ENCODE measurements at regions of chr22 and their contacts with region 1.

Region 1: GRCh38 chr22:31630331-31631329 is 31.4 kb downstream of the PISD start:
- DNase-seq: peak; percentile 83
- ATAC-seq: peak; percentile 80
- H3K4me3 Mint-ChIP-seq: peak overlapping the region; percentile 88
- H3K27ac Mint-ChIP-seq: peak overlapping the region; percentile 95
- H3K4me1 Mint-ChIP-seq: peaks cover 66% of the 10 kb centered on the region
- H3K27me3 Mint-ChIP-seq: no peaks in the 10 kb centered on the region
- CTCF ChIP-seq: no peak

Region 2: GRCh38 chr22:31399211-31400028 is 231.2 kb before region 1 on chr22 and contains the start of gene DRG1:
- CTCF ChIA-PET with region 1: interaction called, 3 read pairs
- POLR2A ChIA-PET with region 1: no interaction called
- intact Hi-C with region 1: loop called (anchors 1 kb)
- DNase-seq: peak; percentile 97
- ATAC-seq: peak; percentile 98
- H3K4me3 Mint-ChIP-seq: peak within 1 kb of the TSS; percentile 93
- H3K27ac Mint-ChIP-seq: peak within 1 kb of the TSS; percentile 88
- H3K4me1 Mint-ChIP-seq: peaks cover 20% of the 10 kb centered on the region
- H3K27me3 Mint-ChIP-seq: no peaks in the 10 kb centered on the region
- CTCF ChIP-seq: no peak
- total RNA-seq, gene DRG1: 68.5 and 71.1 TPM in 2 replicates

Region 3: GRCh38 chr22:31496007-31496734 is 134.5 kb before region 1 on chr22 and contains the start of gene SFI1:
- CTCF ChIA-PET with region 1: no interaction called
- POLR2A ChIA-PET with region 1: interaction called, 4 read pairs
- intact Hi-C with region 1: loop called (anchors 1 kb)
- DNase-seq: peak; percentile 96
- ATAC-seq: peak; percentile 83
- H3K4me3 Mint-ChIP-seq: peak within 1 kb of the TSS; percentile 95
- H3K27ac Mint-ChIP-seq: peak within 1 kb of the TSS; percentile 97
- H3K4me1 Mint-ChIP-seq: peaks cover 42% of the 10 kb centered on the region
- H3K27me3 Mint-ChIP-seq: no peaks in the 10 kb centered on the region
- CTCF ChIP-seq: no peak
- total RNA-seq, gene SFI1: 110 and 126 TPM in 2 replicates

Region 4: DNA sequence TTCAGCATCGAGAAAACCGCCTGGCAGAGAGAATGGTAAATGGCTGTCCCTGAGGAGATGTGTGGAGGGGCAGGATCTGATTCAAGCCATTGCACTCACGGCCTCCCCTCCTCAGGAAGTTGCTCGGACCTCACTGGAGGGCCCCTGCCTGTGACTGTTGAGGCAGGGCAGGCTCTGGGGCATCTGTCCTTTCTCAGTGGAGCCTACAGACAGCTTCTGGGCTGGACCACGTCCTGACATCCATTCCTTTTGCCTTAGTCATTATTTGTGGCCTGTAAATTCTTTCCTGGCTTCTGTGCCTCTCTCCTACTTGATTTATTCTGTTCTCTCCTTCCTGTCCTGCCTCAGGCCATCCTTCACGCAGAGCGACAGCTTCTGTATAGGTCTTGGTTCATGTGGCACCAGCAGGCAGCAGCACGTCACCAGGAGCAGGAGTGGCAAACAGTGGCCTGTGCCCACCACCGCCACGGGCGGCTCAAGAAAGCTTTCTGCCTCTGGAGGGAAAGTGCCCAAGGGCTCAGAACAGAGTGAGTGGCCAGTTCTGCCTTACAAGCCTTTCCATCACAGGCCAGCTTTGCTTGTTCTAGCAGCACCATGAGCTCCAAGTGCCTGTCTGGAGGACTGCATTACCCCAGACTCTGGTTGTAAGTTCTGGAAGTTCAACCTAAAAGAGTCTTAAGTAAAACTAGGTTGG is 28.2 kb before region 1 on chr22:
- CTCF ChIA-PET with region 1: no interaction called
- POLR2A ChIA-PET with region 1: no interaction called
- intact Hi-C with region 1: no loop called
- DNase-seq: no peak
- ATAC-seq: no peak
- H3K4me3 Mint-ChIP-seq: no peak overlapping the region
- H3K27ac Mint-ChIP-seq: no peak overlapping the region
- H3K4me1 Mint-ChIP-seq: no peaks in the 10 kb centered on the region
- H3K27me3 Mint-ChIP-seq: no peaks in the 10 kb centered on the region
- CTCF ChIP-seq: no peak

Region 5: DNA sequence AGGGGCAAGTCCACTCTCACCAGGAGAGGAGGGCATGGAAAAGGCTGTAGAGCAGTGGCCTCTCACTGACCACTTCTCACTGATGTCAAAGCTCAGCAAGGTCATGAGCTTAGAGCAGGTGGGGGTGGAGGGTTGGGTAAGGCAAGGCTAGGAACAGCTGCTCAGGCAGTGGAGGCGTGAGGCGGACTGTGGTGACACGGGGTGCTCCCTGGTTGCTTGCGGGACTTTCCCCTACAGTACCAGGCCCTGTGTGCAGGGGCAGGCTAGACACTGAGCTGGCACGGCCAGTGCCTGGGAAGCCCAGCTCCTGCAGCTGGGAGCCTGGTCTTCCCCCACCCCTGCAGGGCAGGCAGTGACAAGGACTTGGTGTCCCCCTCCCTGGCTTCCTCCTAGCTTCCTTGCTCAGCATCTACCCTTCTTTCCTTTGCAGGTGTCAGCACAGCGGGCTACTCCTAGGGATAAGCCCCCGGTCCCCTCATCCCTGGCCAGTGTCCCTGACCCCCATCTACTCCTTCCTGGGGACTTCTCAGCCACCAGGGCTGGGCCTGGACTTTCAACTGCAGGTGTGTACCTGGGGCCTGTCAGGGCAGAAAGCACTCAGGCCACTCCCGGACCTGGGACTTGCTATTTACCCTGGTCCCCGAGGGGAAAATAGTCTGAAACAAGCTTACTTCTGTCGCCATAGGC is 14.2 kb before region 1 on chr22:
- CTCF ChIA-PET with region 1: interaction called, 5 read pairs
- POLR2A ChIA-PET with region 1: interaction called, 23 read pairs
- intact Hi-C with region 1: loop called (anchors 1 kb)
- DNase-seq: no peak
- ATAC-seq: peak; percentile 96
- H3K4me3 Mint-ChIP-seq: no peak overlapping the region
- H3K27ac Mint-ChIP-seq: peak overlapping the region; percentile 69
- H3K4me1 Mint-ChIP-seq: peaks cover 33% of the 10 kb centered on the region
- H3K27me3 Mint-ChIP-seq: no peaks in the 10 kb centered on the region
- CTCF ChIP-seq: no peak

Region 6: GRCh38 chr22:31676700-31677099 is 46.1 kb after region 1 on chr22:
- CTCF ChIA-PET with region 1: interaction called, 3 read pairs
- POLR2A ChIA-PET with region 1: interaction called, 11 read pairs
- intact Hi-C with region 1: no loop called
- DNase-seq: peak; percentile 84
- ATAC-seq: peak; percentile 99
- H3K4me3 Mint-ChIP-seq: peak overlapping the region; percentile 96
- H3K27ac Mint-ChIP-seq: peak overlapping the region; percentile 94
- H3K4me1 Mint-ChIP-seq: peaks cover 25% of the 10 kb centered on the region
- H3K27me3 Mint-ChIP-seq: no peaks in the 10 kb centered on the region
- CTCF ChIP-seq: no peak

Measured in activated B cell treated with CpG ODN at 0.5 μM for 24 hours (primary cell).